Naive thymus-derived CD4-positive, alpha-beta T cell (primary cell): ENCODE measurements at regions of chr11 and their contacts with region 1.

Region 1: DNA sequence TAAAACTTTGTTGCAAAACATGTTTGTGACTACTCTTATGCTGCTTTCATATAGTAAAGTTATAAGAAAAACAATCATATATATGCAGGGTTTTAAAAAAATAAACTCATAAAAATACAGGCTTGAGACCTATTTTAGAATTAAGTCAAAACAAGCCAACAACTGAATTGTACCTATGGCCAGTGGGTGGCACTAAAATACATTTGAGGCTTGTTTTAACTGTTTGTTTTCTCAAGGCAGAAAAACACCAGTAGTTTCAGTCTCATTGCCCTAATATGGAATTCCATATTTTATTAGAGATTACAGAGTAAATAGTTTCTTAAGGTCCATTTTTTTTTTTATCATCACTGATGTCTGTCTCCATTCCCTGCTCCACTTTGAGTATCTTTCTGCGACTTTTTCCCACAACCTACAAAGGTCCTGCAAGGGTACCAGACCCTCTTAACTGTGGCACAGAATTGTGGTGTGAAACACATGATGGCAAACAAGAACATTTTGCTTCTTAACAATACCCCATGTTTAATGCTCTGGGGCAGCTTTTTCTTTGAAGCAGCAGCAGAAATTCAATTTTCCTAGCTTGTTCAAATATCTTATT is 8.5 kb upstream of the CCDC89 start:
- DNase-seq: peak in 7 of 9 donors; percentile 36 to 63 (median 55)
- ATAC-seq: peak; percentile 70
- H3K4me3 ChIP-seq: no peak overlapping the region
- H3K4me3 Mint-ChIP-seq: no peak overlapping the region
- H3K27ac ChIP-seq: no peak overlapping the region
- H3K27ac Mint-ChIP-seq: peak overlapping the region in 1 of 9 donors; percentile 12
- H3K4me1 ChIP-seq: peaks cover 2 to 7% of the 10 kb centered on the region in 2 donors
- H3K4me1 Mint-ChIP-seq: peaks cover 2 to 52% (median 8%) of the 10 kb centered on the region in 7 donors
- H3K27me3 ChIP-seq: no peaks in the 10 kb centered on the region
- H3K27me3 Mint-ChIP-seq: peaks cover 0 to 3% (median 0%) of the 10 kb centered on the region in 5 donors

Region 2: DNA sequence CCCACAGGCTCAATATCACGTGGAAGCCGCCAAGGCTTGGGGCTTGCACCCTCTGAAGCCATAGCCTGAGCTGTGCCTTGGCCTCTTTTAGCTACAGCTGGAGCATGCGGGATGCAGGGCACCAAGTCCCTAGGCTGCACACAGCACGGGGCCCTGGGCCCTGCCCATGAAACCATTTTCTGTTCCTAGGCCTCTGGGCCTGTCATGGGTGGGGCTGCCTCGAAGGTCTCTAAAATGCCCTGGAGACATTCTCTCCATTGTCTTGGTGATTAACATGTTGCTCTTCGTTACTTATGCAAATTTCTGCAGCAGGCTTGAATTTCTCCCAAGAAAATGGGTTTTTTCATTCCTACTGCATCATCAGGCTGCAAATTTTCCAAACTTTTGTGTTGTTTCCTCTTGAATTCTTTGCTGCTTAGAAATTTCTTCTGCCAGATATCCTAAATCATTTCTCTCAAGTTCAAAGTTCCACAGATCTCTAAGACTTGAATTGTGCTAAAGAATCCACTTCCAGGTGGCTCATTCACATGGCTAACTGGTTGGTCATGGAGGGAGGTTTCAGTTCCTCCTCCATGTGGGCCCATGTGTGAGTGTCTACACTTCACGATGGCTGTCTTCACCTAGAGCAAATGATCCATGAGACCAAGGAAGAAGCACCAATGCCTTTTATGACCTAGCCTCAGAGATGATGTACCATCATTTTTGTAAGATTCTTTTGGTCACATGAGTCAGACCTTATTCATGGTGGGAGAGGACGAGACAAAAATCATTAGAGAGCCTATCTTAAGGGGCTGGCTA is 22.2 kb before region 1 on chr11:
- CTCF ChIA-PET with region 1: no interaction called
- POLR2A ChIA-PET with region 1: no interaction called
- intact Hi-C with region 1: no loop called
- DNase-seq: no peak
- ATAC-seq: no peak
- H3K4me3 ChIP-seq: no peak overlapping the region
- H3K4me3 Mint-ChIP-seq: no peak overlapping the region
- H3K27ac ChIP-seq: no peak overlapping the region
- H3K27ac Mint-ChIP-seq: no peak overlapping the region
- H3K4me1 ChIP-seq: no peaks in the 10 kb centered on the region
- H3K4me1 Mint-ChIP-seq: peaks cover 0 to 3% (median 0%) of the 10 kb centered on the region in 7 donors
- H3K27me3 ChIP-seq: no peaks in the 10 kb centered on the region
- H3K27me3 Mint-ChIP-seq: peaks cover 0 to 7% (median 0%) of the 10 kb centered on the region in 5 donors

Region 3: GRCh38 chr11:85772695-85773094 is 78.2 kb after region 1 on chr11:
- CTCF ChIA-PET with region 1: no interaction called
- POLR2A ChIA-PET with region 1: no interaction called
- intact Hi-C with region 1: loop called in 1 of 2 experiments (anchors 5 kb)
- DNase-seq: no peak
- ATAC-seq: no peak
- H3K4me3 ChIP-seq: no peak overlapping the region
- H3K4me3 Mint-ChIP-seq: no peak overlapping the region
- H3K27ac ChIP-seq: no peak overlapping the region
- H3K27ac Mint-ChIP-seq: peak overlapping the region in 1 of 9 donors; percentile 26
- H3K4me1 ChIP-seq: peaks cover 6 to 11% of the 10 kb centered on the region in 2 donors
- H3K4me1 Mint-ChIP-seq: peaks cover 26 to 75% (median 56%) of the 10 kb centered on the region in 7 donors
- H3K27me3 ChIP-seq: no peaks in the 10 kb centered on the region
- H3K27me3 Mint-ChIP-seq: no peaks in the 10 kb centered on the region

Region 4: DNA sequence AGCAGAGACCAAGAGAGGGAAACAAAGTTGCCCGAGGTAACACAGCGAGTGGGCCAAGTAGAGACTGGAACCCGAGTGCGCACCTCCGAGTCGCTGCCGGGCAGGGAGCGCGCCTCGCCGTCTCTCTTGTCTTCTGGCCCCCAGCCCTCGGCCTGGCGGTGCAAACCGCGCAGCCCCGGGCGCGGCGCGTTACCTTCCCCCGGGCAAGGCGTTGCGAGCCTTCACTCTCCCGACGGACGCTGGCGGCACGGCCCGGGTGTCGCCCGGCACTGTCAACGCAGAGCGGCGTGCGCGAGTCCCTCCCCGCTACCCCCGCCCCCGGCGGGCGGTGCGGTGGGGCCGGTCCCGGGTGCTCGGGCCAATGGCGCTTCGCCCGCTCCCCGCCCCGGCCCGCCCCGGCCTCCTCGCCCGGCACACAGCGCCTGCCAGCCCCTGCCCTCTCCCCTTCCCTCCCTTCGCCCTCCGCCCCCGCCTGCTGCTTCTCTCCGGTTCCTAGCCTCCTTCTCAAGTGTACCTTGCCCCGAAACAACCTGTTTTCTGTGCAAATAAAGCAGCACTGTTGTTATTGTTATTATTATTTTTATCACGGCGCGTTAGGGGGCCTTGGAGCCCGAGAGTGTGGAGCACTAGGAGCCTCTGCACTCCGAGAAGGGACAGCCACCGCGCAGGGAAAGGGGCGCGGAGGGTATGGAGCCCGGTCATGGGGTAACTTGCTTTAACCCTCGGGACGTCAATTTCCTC is 116.6 kb after region 1 on chr11 and contains the start of gene SYTL2:
- CTCF ChIA-PET with region 1: interaction called, 6 read pairs
- POLR2A ChIA-PET with region 1: interaction called, 3 read pairs
- intact Hi-C with region 1: loop called (anchors 1 kb)
- DNase-seq: peak; percentile 69 to 87 (median 75)
- ATAC-seq: peak; percentile 95
- H3K4me3 ChIP-seq: peak within 1 kb of the TSS; percentile 86
- H3K4me3 Mint-ChIP-seq: peak within 1 kb of the TSS; percentile 87 to 97 (median 95)
- H3K27ac ChIP-seq: peak within 1 kb of the TSS; percentile 64
- H3K27ac Mint-ChIP-seq: peak within 1 kb of the TSS; percentile 79 to 98 (median 93)
- H3K4me1 ChIP-seq: peaks cover 14 to 32% of the 10 kb centered on the region in 2 donors
- H3K4me1 Mint-ChIP-seq: peaks cover 32 to 61% (median 52%) of the 10 kb centered on the region in 7 donors
- H3K27me3 ChIP-seq: no peaks in the 10 kb centered on the region
- H3K27me3 Mint-ChIP-seq: peaks cover 0 to 10% (median 0%) of the 10 kb centered on the region in 5 donors
- total RNA-seq, gene SYTL2: 24.8 to 62.9 (median 27.5) TPM

Region 5: GRCh38 chr11:85988780-85989179 is 294.3 kb after region 1 on chr11:
- CTCF ChIA-PET with region 1: no interaction called
- POLR2A ChIA-PET with region 1: no interaction called
- intact Hi-C with region 1: loop called in 1 of 2 experiments (anchors 10 kb)
- DNase-seq: no peak
- ATAC-seq: no peak
- H3K4me3 ChIP-seq: no peak overlapping the region
- H3K4me3 Mint-ChIP-seq: no peak overlapping the region
- H3K27ac ChIP-seq: no peak overlapping the region
- H3K27ac Mint-ChIP-seq: peak overlapping the region in 5 of 9 donors; percentile 41 to 89 (median 52)
- H3K4me1 ChIP-seq: no peaks in the 10 kb centered on the region
- H3K4me1 Mint-ChIP-seq: peaks cover 5 to 23% (median 15%) of the 10 kb centered on the region in 7 donors
- H3K27me3 ChIP-seq: no peaks in the 10 kb centered on the region
- H3K27me3 Mint-ChIP-seq: no peaks in the 10 kb centered on the region

Region 6: DNA sequence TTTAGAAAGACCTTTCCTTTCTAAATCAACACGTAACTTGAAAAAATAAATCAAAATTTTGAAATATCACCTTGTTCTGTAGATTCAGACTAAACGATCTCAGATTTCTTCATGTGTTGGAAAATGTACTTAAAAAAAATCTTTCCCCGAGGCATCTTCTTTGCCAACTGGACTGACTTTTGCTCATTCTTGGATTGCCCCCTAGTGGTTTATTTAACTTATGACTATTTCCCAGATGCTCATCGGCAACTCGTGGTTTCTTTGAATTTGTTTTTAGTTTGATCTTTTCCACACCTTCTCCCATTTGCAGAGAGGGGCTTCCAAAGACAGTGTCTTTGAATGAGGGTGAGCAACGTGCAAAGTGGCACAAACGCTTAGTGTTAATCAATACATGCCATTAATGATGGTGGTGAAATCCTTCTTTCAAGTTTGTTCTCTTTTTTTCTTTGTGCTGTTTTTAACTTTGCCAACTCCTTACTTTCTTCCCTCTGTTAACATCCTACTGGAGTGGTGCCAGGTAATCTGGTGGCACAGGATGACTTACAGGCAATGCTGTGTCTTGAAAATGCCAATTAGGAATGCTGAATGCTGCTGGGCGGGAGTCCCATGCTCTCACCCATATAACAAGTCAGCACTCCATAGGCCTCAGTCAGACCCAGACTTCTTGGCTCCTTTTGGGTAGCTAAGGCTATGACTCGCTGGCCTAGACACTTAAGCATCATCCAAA is 1124.1 kb after region 1 on chr11:
- CTCF ChIA-PET with region 1: no interaction called
- POLR2A ChIA-PET with region 1: no interaction called
- intact Hi-C with region 1: loop called in 1 of 2 experiments (anchors 1 kb)
- DNase-seq: peak in 7 of 9 donors; percentile 13 to 42 (median 34)
- ATAC-seq: peak; percentile 56
- H3K4me3 ChIP-seq: no peak overlapping the region
- H3K4me3 Mint-ChIP-seq: no peak overlapping the region
- H3K27ac ChIP-seq: no peak overlapping the region
- H3K27ac Mint-ChIP-seq: peak overlapping the region in 1 of 9 donors; percentile 39
- H3K4me1 ChIP-seq: no peaks in the 10 kb centered on the region
- H3K4me1 Mint-ChIP-seq: peaks cover 0 to 7% (median 5%) of the 10 kb centered on the region in 7 donors
- H3K27me3 ChIP-seq: no peaks in the 10 kb centered on the region
- H3K27me3 Mint-ChIP-seq: peaks cover 3 to 31% (median 13%) of the 10 kb centered on the region in 5 donors